HepG2 (cell line): ENCODE measurements at regions of chr3 and their contacts with region 1.

Region 1: GRCh38 chr3:114624571-114625181 is 330.8 kb downstream of the TIGIT start:
- DNase-seq: peak; percentile 87
- ATAC-seq: peak; percentile 96
- H3K4me3 ChIP-seq: peak overlapping the region; percentile 52 to 71 (median 57)
- H3K27ac ChIP-seq: peak overlapping the region; percentile 76
- H3K4me1 ChIP-seq: peaks cover 39% of the 10 kb centered on the region
- H3K27me3 ChIP-seq: no peaks in the 10 kb centered on the region
- CTCF ChIP-seq: no peak
- EP300 ChIP-seq: peak in 1 of 2 experiments; percentile 56; a peak in 1 of 4 replicates
- POLR2A ChIP-seq: peak; percentile 40 to 89; a peak in 3 of 4 replicates
- RAD21 ChIP-seq: no peak

Region 2: GRCh38 chr3:114659109-114660061 is 34.7 kb after region 1 on chr3:
- CTCF ChIA-PET with region 1: no interaction called
- POLR2A ChIA-PET with region 1: no interaction called
- in situ Hi-C with region 1: no loop called
- intact Hi-C with region 1: loop called (anchors 5 kb)
- DNase-seq: peak; percentile 62
- ATAC-seq: peak; percentile 97
- H3K4me3 ChIP-seq: peak overlapping the region in 2 of 3 experiments; percentile 31 to 44; a peak in 2 of 6 replicates
- H3K27ac ChIP-seq: peak overlapping the region; percentile 80
- H3K4me1 ChIP-seq: peaks cover 14% of the 10 kb centered on the region
- H3K27me3 ChIP-seq: no peaks in the 10 kb centered on the region
- CTCF ChIP-seq: peak; percentile 49
- EP300 ChIP-seq: no peak
- POLR2A ChIP-seq: no peak
- RAD21 ChIP-seq: no peak

Region 3: DNA sequence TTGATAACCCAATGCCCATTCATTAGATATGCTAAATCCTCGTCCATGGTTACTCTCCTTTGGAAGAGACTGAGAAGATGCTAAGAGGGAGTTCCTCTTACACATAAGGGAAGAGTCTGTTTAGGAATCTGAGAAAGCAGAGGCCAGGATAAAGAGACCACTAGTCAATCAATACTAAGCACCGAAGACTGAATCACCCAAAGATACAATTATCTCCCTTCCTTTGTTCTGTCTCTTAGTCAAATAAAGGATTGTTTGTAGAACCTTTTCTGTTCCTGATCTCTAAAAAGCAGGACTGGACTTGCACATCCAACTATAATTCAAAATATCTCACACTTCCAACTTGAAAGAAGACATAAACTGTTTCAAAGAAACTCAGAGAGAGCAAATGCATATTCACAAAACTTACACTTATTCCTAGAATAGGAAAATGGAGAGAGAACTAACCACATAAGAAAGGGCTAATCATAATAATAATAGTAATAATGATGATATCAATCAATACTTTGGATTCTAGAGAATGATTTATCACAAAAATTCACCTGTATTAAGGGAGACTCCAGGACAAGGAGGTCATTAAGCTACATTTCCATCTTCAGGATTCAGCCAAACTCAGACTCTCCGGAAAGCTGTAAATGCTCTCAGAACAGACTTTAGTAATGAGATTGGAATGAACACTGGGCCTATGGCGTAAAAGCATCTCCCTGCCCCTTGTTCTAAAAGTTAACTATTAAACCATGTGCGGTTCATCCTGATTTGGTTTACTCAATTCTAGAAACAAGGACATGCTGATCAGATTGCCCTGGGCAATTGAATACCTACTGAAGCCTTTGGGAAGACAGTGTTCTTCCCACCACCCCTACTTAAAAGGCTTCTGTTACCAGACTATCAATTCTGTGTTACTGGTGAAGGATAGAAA is 120.9 kb after region 1 on chr3:
- CTCF ChIA-PET with region 1: no interaction called
- POLR2A ChIA-PET with region 1: no interaction called
- in situ Hi-C with region 1: no loop called
- intact Hi-C with region 1: loop called (anchors 10 kb)
- DNase-seq: peak; percentile 91
- ATAC-seq: peak; percentile 100
- H3K4me3 ChIP-seq: peak overlapping the region; percentile 39 to 55 (median 46); a peak in 5 of 6 replicates
- H3K27ac ChIP-seq: peak overlapping the region; percentile 54
- H3K4me1 ChIP-seq: peaks cover 46% of the 10 kb centered on the region
- H3K27me3 ChIP-seq: no peaks in the 10 kb centered on the region
- CTCF ChIP-seq: no peak
- EP300 ChIP-seq: peak in 1 of 2 experiments; percentile 56; a peak in 1 of 4 replicates
- POLR2A ChIP-seq: no peak
- RAD21 ChIP-seq: no peak